H1 (cell line): ENCODE measurements at regions of chr1 and their contacts with region 1.

Region 1: GRCh38 chr1:183915625-183916510 is 110.9 kb downstream of the RGL1 start:
- DNase-seq: peak; percentile 61 to 68
- H3K4me3 ChIP-seq: no peak overlapping the region
- H3K27ac ChIP-seq: no peak overlapping the region
- H3K4me1 ChIP-seq: no peaks in the 10 kb centered on the region
- H3K27me3 ChIP-seq: no peaks in the 10 kb centered on the region
- CTCF ChIP-seq: peak in 2 of 3 experiments; percentile 81 to 84; a peak in 3 of 4 replicates
- EP300 ChIP-seq: no peak
- POLR2A ChIP-seq: no peak
- RAD21 ChIP-seq: peak; percentile 97 to 98

Region 2: GRCh38 chr1:183655562-183656075 is 260.2 kb before region 1 on chr1:
- CTCF ChIA-PET with region 1: interaction called, 87 read pairs
- POLR2A ChIA-PET with region 1: no interaction called
- DNase-seq: peak; percentile 57 to 89
- H3K4me3 ChIP-seq: no peak overlapping the region
- H3K27ac ChIP-seq: no peak overlapping the region
- H3K4me1 ChIP-seq: no peaks in the 10 kb centered on the region
- H3K27me3 ChIP-seq: no peaks in the 10 kb centered on the region
- CTCF ChIP-seq: peak; percentile 56 to 84 (median 80)
- EP300 ChIP-seq: no peak
- POLR2A ChIP-seq: no peak
- RAD21 ChIP-seq: peak; percentile 94 to 95

Region 3: GRCh38 chr1:183711165-183711682 is 204.6 kb before region 1 on chr1:
- CTCF ChIA-PET with region 1: interaction called, 10 read pairs
- POLR2A ChIA-PET with region 1: no interaction called
- DNase-seq: no peak
- H3K4me3 ChIP-seq: no peak overlapping the region
- H3K27ac ChIP-seq: no peak overlapping the region
- H3K4me1 ChIP-seq: no peaks in the 10 kb centered on the region
- H3K27me3 ChIP-seq: no peaks in the 10 kb centered on the region
- CTCF ChIP-seq: no peak
- EP300 ChIP-seq: no peak
- POLR2A ChIP-seq: no peak
- RAD21 ChIP-seq: no peak

Region 4: DNA sequence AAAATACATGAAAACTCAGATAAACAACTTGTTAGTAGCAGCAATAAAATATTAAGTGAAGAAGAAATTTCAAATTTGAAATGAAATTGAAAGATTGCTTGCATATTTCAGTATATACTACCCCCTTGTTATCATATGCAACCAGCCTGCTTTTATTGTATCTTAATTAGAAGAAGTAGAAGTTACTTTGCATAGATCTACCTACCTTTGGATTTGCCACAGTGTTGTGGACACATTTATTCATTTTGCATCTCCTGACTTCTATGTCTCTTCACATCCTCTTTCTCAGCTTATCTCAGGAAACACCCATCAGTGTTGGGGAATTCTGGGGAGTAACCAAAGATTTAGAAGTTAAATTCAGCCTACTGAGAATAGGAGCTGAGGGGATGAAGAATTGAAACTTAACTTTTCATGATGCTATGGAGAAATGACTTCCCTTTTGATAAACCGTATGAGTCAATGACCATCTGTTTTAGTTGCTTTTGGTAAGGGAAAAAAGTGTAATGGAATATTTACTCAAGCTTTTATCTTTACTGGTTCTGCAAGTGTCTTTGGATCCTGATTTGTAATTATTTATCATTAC is 14.0 kb before region 1 on chr1:
- CTCF ChIA-PET with region 1: interaction called, 23 read pairs
- POLR2A ChIA-PET with region 1: interaction called, 3 read pairs
- DNase-seq: no peak
- H3K4me3 ChIP-seq: no peak overlapping the region
- H3K27ac ChIP-seq: no peak overlapping the region
- H3K4me1 ChIP-seq: no peaks in the 10 kb centered on the region
- H3K27me3 ChIP-seq: no peaks in the 10 kb centered on the region
- CTCF ChIP-seq: no peak
- EP300 ChIP-seq: no peak
- POLR2A ChIP-seq: no peak
- RAD21 ChIP-seq: no peak

Region 5: GRCh38 chr1:183937611-183938010 is 21.7 kb after region 1 on chr1:
- CTCF ChIA-PET with region 1: interaction called, 17 read pairs
- POLR2A ChIA-PET with region 1: no interaction called
- DNase-seq: no peak
- H3K4me3 ChIP-seq: no peak overlapping the region
- H3K27ac ChIP-seq: no peak overlapping the region
- H3K4me1 ChIP-seq: no peaks in the 10 kb centered on the region
- H3K27me3 ChIP-seq: peaks cover 0 to 3% (median under 1%) of the 10 kb centered on the region in 4 experiments; a peak in 2 of 7 replicates
- CTCF ChIP-seq: no peak
- EP300 ChIP-seq: no peak
- POLR2A ChIP-seq: no peak
- RAD21 ChIP-seq: no peak